ENCODE measurements at regions of chr12 and their contacts with region 1.

Region 1: GRCh38 chr12:95538656-95539055 is 12.6 kb downstream of the USP44 start:
- DNase-seq: no peak
- H3K4me3 ChIP-seq: no peak overlapping the region
- CTCF ChIP-seq: no peak

Region 2: DNA sequence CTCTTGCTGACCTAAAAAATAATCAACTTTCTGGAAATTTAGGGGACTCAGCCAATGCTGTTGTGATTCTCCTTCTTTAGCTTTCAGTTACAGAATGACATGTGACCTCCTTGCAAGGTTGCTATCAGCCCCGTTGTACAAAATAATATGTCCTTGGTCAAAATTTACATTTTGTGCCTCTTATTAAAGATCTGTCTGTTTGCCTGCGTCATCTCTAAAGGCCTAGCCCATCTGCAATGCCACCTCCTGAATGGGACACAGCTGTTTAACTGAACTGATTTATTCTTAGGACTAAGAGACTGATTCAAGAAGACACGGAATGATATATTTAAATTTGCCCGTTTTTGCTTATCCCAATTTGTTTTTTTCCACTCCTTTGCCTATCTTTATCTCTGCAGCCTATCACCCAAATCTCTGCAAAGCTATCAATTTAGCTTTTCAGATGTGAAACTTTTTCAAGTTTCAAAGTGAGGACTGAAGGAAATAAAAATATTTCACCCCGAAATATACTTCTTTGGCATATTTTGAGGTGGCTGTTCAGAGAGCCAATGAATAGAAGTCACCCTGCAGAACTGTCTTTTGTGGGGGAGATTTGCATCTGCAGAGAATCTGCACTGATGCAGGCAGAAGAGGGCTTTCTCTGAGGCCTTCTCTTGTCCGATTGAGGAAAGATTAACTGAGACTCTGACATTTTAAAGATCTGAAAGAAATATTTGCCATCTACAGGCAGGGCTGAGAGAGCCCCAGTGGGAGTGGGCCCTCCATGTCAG is 195.0 kb before region 1 on chr12:
- CTCF ChIA-PET with region 1: interaction called, 24 read pairs
- POLR2A ChIA-PET with region 1: no interaction called
- DNase-seq: no peak
- H3K4me3 ChIP-seq: no peak overlapping the region
- CTCF ChIP-seq: no peak

Measured in AG04449 (cell line).